HCT116 (cell line): ENCODE measurements at regions of chr1 and their contacts with region 1.

Region 1: DNA sequence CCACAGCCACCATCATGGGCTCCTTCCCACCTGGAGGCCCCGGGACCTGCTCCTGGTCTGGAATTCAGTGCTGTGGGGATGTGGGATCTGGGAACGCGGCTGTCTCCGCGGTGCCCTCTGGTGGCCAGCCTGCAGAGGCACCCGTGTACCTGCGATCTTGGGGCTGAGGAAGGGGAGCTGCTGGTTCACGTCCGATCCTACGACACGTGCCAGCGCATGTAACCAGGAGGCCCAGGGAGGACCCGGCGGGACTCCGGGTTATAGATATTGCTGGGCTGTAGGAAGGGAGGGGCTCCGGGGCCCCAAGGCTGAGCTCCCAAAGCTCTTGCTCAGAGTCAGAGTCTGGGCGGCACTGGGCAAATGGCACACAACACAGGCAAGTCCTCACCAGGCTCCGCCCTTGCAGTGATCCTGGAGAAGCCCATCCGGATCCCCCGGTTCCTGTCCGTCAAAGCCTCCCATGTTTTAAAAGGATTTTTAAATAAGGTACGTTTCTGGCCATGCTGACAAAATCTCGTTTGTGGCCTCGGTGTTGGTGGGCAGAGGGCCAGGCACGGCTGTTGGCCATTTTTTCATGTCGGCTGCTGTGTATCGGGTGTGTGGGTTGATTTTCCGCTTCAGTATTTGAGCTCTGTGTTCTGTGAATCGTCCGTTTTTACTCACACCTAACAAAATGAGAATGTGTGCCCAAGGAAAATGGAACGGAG is 20.1 kb downstream of the FAAP20 start:
- DNase-seq: peak; percentile 28
- ATAC-seq: peak; percentile 94
- H3K4me3 ChIP-seq: no peak overlapping the region
- H3K27ac ChIP-seq: no peak overlapping the region
- H3K4me1 ChIP-seq: peaks cover 0 to 8% of the 10 kb centered on the region in 2 experiments; a peak in 1 of 4 replicates
- H3K27me3 ChIP-seq: no peaks in the 10 kb centered on the region
- CTCF ChIP-seq: peak; percentile 76 to 95 (median 92)
- POLR2A ChIP-seq: no peak
- RAD21 ChIP-seq: peak; percentile 80

Region 2: GRCh38 chr1:1959840-1960479 is 214.5 kb before region 1 on chr1:
- CTCF ChIA-PET with region 1: no interaction called
- POLR2A ChIA-PET with region 1: no interaction called
- RAD21 ChIA-PET with region 1: no interaction called
- intact Hi-C with region 1: loop called (anchors 1 kb)
- DNase-seq: peak; percentile 71
- ATAC-seq: peak; percentile 94
- H3K4me3 ChIP-seq: peak overlapping the region; percentile 36 to 54
- H3K27ac ChIP-seq: peak overlapping the region; percentile 21; the same call in 1 of the 2 replicates
- H3K4me1 ChIP-seq: peaks cover 5 to 22% of the 10 kb centered on the region in 2 experiments; a peak in 3 of 4 replicates
- H3K27me3 ChIP-seq: no peaks in the 10 kb centered on the region
- CTCF ChIP-seq: peak; percentile 96 to 97 (median 96)
- POLR2A ChIP-seq: peak; percentile 27
- RAD21 ChIP-seq: peak; percentile 96

Region 3: GRCh38 chr1:2133039-2133878 is 41.2 kb before region 1 on chr1:
- CTCF ChIA-PET with region 1: interaction called, 11 read pairs
- POLR2A ChIA-PET with region 1: no interaction called
- RAD21 ChIA-PET with region 1: no interaction called
- intact Hi-C with region 1: no loop called
- DNase-seq: peak; percentile 93
- ATAC-seq: peak; percentile 92
- H3K4me3 ChIP-seq: peak overlapping the region; percentile 33 to 46
- H3K27ac ChIP-seq: peak overlapping the region; percentile 41; the same call in 1 of the 2 replicates
- H3K4me1 ChIP-seq: peaks cover 13 to 45% of the 10 kb centered on the region in 2 experiments
- H3K27me3 ChIP-seq: no peaks in the 10 kb centered on the region
- CTCF ChIP-seq: no peak
- POLR2A ChIP-seq: no peak
- RAD21 ChIP-seq: no peak

Region 4: GRCh38 chr1:2141036-2141435 is 33.5 kb before region 1 on chr1:
- CTCF ChIA-PET with region 1: interaction called, 27 read pairs
- POLR2A ChIA-PET with region 1: no interaction called
- RAD21 ChIA-PET with region 1: no interaction called
- intact Hi-C with region 1: loop called (anchors 2 kb)
- DNase-seq: no peak
- ATAC-seq: no peak
- H3K4me3 ChIP-seq: no peak overlapping the region
- H3K27ac ChIP-seq: peak overlapping the region; percentile 84
- H3K4me1 ChIP-seq: peaks cover 18 to 32% of the 10 kb centered on the region in 2 experiments
- H3K27me3 ChIP-seq: no peaks in the 10 kb centered on the region
- CTCF ChIP-seq: no peak
- POLR2A ChIP-seq: no peak
- RAD21 ChIP-seq: no peak

Region 5: DNA sequence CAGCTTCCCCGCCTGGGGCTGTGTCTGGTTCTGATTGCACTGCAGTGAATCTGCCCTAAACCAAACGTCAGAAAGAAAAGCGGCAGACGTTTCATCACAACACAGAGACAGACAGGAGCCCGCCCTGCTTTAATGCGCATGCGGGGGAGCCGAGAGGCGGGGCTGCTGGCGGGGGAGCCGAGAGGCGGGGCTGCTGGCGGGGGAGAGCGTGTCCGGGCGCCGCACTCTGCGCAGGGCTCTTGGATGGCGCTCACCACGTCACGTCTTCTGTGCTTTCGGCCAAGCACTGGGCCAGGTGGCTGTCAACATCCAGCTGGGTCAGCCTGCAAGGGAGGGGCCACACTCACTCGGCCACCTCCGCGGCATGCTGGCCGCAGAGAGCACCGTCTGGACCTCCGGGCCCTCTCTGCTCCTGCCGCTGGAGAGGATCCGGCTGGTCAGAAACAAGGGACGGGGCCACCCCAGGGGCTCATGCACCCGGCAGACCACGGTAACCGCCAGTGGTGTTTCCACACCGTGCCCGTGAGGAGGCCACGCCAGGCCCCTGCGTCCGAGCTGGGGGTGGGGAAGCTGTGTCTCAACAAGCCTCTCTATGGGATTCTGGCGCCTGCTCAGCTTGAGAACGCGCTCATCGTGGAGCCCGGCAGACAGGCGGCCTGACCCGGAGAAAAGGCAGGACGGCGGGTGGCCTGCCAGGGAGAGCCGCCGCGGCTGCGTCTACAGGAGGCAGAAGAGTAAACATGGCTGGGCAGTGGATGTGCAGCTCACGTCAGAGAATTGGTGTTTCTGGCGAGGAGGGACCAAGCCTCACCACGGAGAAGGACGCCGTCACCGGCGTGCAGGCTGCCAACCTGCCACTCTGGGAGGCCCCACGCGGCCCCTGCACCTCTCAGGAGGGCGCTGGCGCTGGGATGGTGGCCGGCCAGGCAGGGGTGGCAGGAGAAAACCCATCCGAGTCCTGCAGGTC is 15.2 kb after region 1 on chr1:
- CTCF ChIA-PET with region 1: interaction called, 10 read pairs
- POLR2A ChIA-PET with region 1: no interaction called
- RAD21 ChIA-PET with region 1: interaction called in 1 of 2 experiments, 4 read pairs
- intact Hi-C with region 1: no loop called
- DNase-seq: peak; percentile 80
- ATAC-seq: peak; percentile 92
- H3K4me3 ChIP-seq: peak overlapping the region; percentile 40 to 57
- H3K27ac ChIP-seq: peak overlapping the region; percentile 71
- H3K4me1 ChIP-seq: peaks cover 14 to 35% of the 10 kb centered on the region in 2 experiments
- H3K27me3 ChIP-seq: no peaks in the 10 kb centered on the region
- CTCF ChIP-seq: no peak
- POLR2A ChIP-seq: no peak
- RAD21 ChIP-seq: no peak